ENCODE measurements at regions of chrX and their contacts with region 1.

Region 1: DNA sequence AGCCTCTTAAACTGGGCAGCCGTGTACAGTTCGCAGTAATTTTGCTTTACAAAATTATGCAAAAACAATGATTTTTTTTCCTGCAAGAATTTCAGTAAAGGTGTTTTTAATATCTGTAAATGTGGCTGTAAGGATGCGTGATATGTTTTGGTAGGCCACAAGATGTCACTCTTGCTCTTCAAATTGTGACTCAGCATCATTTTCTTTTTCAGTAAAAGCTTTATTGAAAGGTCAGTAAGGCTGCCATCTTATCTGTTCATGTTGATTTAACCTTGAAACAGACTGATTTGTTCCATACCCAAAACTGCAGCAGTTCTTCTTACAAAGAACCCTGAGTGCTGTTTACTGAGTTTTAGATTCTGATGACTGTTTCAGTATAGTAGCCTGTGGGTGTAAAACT is 39.9 kb downstream of the TXLNG start:
- DNase-seq: no peak
- ATAC-seq: peak; percentile 57
- H3K4me3 Mint-ChIP-seq: no peak overlapping the region
- H3K27ac Mint-ChIP-seq: peak overlapping the region; percentile 63
- H3K4me1 Mint-ChIP-seq: peaks cover 29% of the 10 kb centered on the region
- H3K27me3 Mint-ChIP-seq: no peaks in the 10 kb centered on the region

Region 2: GRCh38 chrX:16559206-16559619 is 267.0 kb before region 1 on chrX:
- CTCF ChIA-PET with region 1: no interaction called
- DNase-seq: no peak
- ATAC-seq: no peak
- H3K4me3 Mint-ChIP-seq: no peak overlapping the region
- H3K27ac Mint-ChIP-seq: no peak overlapping the region
- H3K4me1 Mint-ChIP-seq: peaks cover 6% of the 10 kb centered on the region
- H3K27me3 Mint-ChIP-seq: no peaks in the 10 kb centered on the region

Region 3: GRCh38 chrX:16892504-16893362 is 66.5 kb after region 1 on chrX:
- CTCF ChIA-PET with region 1: interaction called, 11 read pairs
- DNase-seq: peak; percentile 67
- ATAC-seq: peak; percentile 78
- H3K4me3 Mint-ChIP-seq: no peak overlapping the region
- H3K27ac Mint-ChIP-seq: no peak overlapping the region
- H3K4me1 Mint-ChIP-seq: peaks cover 11% of the 10 kb centered on the region
- H3K27me3 Mint-ChIP-seq: peaks cover 4% of the 10 kb centered on the region

Region 4: GRCh38 chrX:17046478-17047097 is 220.4 kb after region 1 on chrX:
- CTCF ChIA-PET with region 1: interaction called, 11 read pairs
- DNase-seq: peak; percentile 51
- ATAC-seq: peak; percentile 49
- H3K4me3 Mint-ChIP-seq: no peak overlapping the region
- H3K27ac Mint-ChIP-seq: no peak overlapping the region
- H3K4me1 Mint-ChIP-seq: no peaks in the 10 kb centered on the region
- H3K27me3 Mint-ChIP-seq: peaks cover 3% of the 10 kb centered on the region